Pancreas (tissue), 10 donors: ENCODE measurements at regions of chr6 and their contacts with region 1.

Region 1: DNA sequence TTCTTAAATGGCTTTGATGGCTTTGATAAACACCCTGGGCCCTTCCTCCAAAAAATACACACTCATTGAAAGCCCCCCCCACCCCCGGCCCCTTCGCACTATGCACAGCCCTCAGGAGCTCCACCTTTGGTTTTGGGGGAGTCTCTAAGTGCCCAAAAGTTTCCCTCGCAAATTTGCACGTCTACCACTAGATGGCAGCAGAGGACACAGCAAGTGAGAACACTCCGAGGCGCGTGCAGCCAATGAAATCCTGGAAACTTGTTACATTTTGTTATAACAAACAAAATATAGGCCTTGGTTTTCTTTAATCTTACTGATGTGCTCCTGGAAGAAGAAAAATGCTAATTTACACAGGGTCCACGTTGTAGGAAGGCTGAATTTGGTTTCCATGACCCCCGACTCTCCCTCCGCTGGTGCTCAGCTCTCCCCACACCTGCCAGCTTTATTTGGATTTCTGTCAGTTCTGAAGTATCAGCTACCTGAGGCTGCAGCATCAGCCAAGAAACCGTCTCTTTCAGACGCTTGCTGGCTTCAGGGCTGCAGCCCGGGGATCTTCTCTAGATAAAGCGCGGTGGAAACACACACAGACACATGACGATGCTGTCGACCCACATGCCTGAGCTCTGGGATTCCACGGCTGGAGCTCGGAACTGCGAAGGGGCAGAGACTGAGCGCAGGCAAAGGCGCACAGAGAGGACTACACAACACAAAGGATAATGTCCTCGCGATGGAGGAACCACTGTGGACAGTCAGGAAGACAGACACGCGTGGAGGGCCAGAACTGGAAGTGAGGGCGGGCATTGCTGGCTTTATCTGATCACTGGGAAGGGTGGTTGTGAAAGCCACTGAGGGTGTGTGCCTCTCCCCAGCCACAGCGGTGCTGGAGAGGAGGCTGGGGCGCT is 148.4 kb upstream of the RPS6KA2 start:
- DNase-seq: peak in 3 of 6 donors; percentile 26 to 52 (median 31)
- ATAC-seq: peak; percentile 55 to 89 (median 82)
- H3K4me3 ChIP-seq: no peak overlapping the region
- H3K27ac ChIP-seq: no peak overlapping the region
- H3K4me1 ChIP-seq: no peaks in the 10 kb centered on the region
- H3K27me3 ChIP-seq: no peaks in the 10 kb centered on the region
- CTCF ChIP-seq: peak; percentile 70 to 88 (median 74)

Region 2: GRCh38 chr6:166656230-166657149 is 118.9 kb before region 1 on chr6:
- intact Hi-C with region 1: no loop called
- DNase-seq: peak in 3 of 6 donors; percentile 37 to 73 (median 52)
- ATAC-seq: peak; percentile 49 to 65 (median 61)
- H3K4me3 ChIP-seq: no peak overlapping the region
- H3K27ac ChIP-seq: no peak overlapping the region
- H3K4me1 ChIP-seq: no peaks in the 10 kb centered on the region
- H3K27me3 ChIP-seq: no peaks in the 10 kb centered on the region
- CTCF ChIP-seq: no peak

Region 3: GRCh38 chr6:166989427-166990032 is 214.1 kb after region 1 on chr6:
- intact Hi-C with region 1: loop called in 2 of 3 experiments (anchors 10 kb)
- DNase-seq: peak in 1 of 6 donors; percentile 17
- ATAC-seq: peak; percentile 61 to 88 (median 88)
- H3K4me3 ChIP-seq: no peak overlapping the region
- H3K27ac ChIP-seq: no peak overlapping the region
- H3K4me1 ChIP-seq: peaks cover 0 to 6% (median 0%) of the 10 kb centered on the region in 3 donors
- H3K27me3 ChIP-seq: no peaks in the 10 kb centered on the region
- CTCF ChIP-seq: peak in 3 of 4 donors; percentile 13 to 37 (median 32)

Region 4: DNA sequence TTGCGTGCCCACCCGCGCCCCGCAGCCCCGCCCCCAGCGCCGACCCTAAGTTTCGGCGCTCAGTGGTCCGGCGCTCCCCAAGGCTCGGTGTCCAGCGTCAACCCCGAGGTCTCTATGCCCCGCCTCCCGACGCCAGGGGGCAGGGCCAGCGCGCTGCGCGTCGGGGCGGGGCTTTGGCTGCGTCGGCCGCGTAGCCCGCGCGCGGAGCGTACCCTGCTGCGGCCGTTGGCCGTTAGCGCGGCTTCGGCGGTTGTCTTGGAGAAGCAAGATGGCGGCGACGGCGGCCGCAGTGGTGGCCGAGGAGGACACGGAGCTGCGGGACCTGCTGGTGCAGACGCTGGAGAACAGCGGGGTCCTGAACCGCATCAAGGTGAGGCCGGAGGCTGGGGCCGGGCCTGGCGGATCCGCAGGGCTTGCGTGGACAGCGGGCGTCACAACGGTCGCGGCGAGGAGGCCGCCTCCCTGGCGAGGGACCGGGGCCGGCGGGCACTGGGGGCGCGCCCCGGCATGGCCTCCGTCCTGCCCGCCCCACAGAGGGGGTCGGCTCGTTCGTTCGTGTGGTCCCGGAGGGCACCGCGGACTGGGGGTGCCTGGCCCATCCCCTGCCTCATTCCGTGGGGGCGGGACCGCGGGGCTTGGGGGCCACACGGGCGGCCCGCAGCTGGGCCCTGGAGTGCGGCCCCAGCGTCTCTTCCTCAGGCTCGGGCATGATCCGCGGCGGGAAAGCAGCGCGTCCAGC is 223.9 kb after region 1 on chr6 and contains the start of gene CEP43:
- intact Hi-C with region 1: loop called in 1 of 3 experiments (anchors 10 kb)
- DNase-seq: peak; percentile 89 to 97 (median 96)
- ATAC-seq: peak; percentile 94 to 98 (median 96)
- H3K4me3 ChIP-seq: peak within 1 kb of the TSS; percentile 83 to 99 (median 98)
- H3K27ac ChIP-seq: peak within 1 kb of the TSS in 3 of 4 donors; percentile 43 to 60 (median 50)
- H3K4me1 ChIP-seq: peaks cover 0 to 8% (median 7%) of the 10 kb centered on the region in 3 donors
- H3K27me3 ChIP-seq: no peaks in the 10 kb centered on the region
- CTCF ChIP-seq: peak in 1 of 4 donors; percentile 5
- total RNA-seq, gene CEP43: 4.4 to 11.9 (median 6.4) TPM

Region 5: DNA sequence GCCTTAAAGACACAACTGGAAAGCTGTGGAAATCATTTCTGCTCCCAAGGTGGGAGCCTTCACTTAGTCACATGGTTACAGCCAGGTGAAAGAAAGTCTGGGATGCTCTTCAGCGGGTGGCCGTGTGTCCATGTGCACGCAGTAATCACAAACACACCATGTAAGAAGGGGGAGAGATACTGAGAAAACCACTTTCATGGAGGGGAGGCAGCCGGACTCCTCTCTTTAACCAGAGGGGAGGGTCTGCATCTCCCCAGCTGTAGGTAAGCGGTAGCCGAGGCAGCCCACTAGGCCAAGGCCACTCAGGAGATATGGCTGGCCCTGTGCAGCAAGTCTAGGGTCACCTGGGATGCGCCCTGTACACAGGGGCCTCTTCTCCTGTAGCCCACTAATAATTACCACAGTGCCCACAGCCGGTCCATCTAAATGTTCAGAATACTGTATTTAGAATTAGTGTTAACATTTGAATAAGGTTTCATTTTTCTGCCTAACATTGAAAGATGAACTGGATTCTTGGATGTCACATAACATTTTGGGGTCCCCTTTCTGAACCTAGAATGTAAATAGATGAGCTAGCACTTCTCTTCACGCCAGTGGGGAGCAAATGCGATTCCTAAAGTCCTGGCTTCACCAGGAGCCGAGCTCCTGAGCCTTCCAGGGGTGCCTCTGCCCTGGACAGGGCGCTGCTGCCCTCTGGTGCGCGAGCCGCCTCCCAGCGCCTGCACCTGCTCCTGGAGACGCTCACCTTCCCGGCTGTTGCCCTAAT is 366.4 kb after region 1 on chr6:
- intact Hi-C with region 1: loop called in 1 of 3 experiments (anchors 10 kb)
- DNase-seq: peak in 3 of 6 donors; percentile 11 to 77 (median 46)
- ATAC-seq: peak; percentile 70 to 94 (median 91)
- H3K4me3 ChIP-seq: no peak overlapping the region
- H3K27ac ChIP-seq: no peak overlapping the region
- H3K4me1 ChIP-seq: no peaks in the 10 kb centered on the region
- H3K27me3 ChIP-seq: no peaks in the 10 kb centered on the region
- CTCF ChIP-seq: peak in 3 of 4 donors; percentile 26 to 58 (median 55)